Endothelial cell of umbilical vein (primary cell): ENCODE measurements at regions of chr3 and their contacts with region 1.

Region 1: DNA sequence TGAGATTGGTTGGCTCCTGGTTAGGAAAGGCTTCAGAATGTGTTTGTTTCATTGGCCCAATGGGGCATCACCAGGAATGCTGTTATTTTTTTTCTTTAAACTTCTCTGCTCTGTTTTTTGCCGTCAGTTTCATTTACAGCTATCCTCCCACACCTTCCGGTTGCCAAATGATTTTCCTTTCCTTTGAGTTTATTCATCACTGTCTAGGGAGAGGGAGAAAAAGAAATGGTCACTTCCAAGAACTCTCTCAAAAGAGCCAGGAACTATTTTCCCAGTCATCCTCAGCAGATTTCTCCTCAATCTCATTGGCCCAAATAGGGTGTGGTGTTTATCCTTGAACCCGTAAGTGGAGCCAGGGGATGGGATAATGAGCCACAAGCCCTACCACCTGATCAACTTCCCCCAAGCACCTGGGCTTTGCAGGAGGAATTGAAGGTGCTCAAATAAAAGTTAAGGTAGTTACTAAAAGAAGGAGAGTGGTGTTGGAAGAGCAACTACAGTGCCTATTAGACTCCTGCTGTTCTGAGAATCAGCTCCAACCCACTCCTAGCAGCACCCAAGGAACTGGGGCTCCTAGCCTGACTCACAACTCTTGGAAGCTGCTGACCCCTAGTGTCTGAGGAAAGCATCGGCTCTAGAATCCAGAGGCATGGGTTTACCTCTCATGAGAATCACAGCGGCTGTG is 183.8 kb upstream of the IL12A start:
- DNase-seq: peak; percentile 85
- H3K4me3 ChIP-seq: no peak overlapping the region
- H3K27ac ChIP-seq: peak overlapping the region; percentile 19
- H3K4me1 ChIP-seq: peaks cover 18% of the 10 kb centered on the region
- H3K27me3 ChIP-seq: no peaks in the 10 kb centered on the region
- CTCF ChIP-seq: peak; percentile 92 to 96
- POLR2A ChIP-seq: no peak

Region 2: DNA sequence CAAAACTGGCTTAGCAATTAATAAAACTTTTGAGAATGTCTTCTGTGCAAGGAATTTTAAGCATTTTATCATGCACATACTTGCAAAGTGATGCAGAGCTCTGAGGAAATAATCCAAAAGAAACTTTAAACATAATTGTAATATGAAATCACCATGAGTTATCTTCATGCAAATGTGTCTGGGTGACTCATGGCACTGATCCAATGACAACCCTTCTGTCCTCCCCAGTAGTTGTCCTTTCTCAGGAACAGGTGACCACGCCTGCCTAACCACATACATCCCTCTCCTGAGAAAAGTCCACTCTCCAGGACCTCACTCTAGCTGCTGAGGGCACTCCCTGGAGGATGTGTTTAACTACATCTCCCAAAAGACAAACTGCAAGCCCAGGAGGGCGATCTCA is 346.9 kb before region 1 on chr3:
- CTCF ChIA-PET with region 1: no interaction called
- POLR2A ChIA-PET with region 1: no interaction called
- dilution Hi-C with region 1: no loop called
- intact Hi-C with region 1: loop called (anchors 10 kb)
- DNase-seq: peak; percentile 58
- H3K4me3 ChIP-seq: no peak overlapping the region
- H3K27ac ChIP-seq: no peak overlapping the region
- H3K4me1 ChIP-seq: no peaks in the 10 kb centered on the region
- H3K27me3 ChIP-seq: no peaks in the 10 kb centered on the region
- CTCF ChIP-seq: no peak
- POLR2A ChIP-seq: no peak

Region 3: GRCh38 chr3:159711560-159712333 is 93.1 kb before region 1 on chr3:
- CTCF ChIA-PET with region 1: interaction called, 13 read pairs
- POLR2A ChIA-PET with region 1: no interaction called
- dilution Hi-C with region 1: no loop called
- intact Hi-C with region 1: loop called (anchors 2 kb)
- DNase-seq: peak; percentile 99
- H3K4me3 ChIP-seq: no peak overlapping the region
- H3K27ac ChIP-seq: peak overlapping the region; percentile 84
- H3K4me1 ChIP-seq: peaks cover 7% of the 10 kb centered on the region
- H3K27me3 ChIP-seq: peaks cover 0 to 3% of the 10 kb centered on the region in 2 experiments
- CTCF ChIP-seq: no peak
- POLR2A ChIP-seq: peak; percentile 65

Region 4: GRCh38 chr3:159739886-159740453 is 64.9 kb before region 1 on chr3:
- CTCF ChIA-PET with region 1: interaction called, 13 read pairs
- POLR2A ChIA-PET with region 1: no interaction called
- dilution Hi-C with region 1: no loop called
- intact Hi-C with region 1: no loop called
- DNase-seq: no peak
- H3K4me3 ChIP-seq: no peak overlapping the region
- H3K27ac ChIP-seq: no peak overlapping the region
- H3K4me1 ChIP-seq: no peaks in the 10 kb centered on the region
- H3K27me3 ChIP-seq: no peaks in the 10 kb centered on the region
- CTCF ChIP-seq: no peak
- POLR2A ChIP-seq: no peak

Region 5: DNA sequence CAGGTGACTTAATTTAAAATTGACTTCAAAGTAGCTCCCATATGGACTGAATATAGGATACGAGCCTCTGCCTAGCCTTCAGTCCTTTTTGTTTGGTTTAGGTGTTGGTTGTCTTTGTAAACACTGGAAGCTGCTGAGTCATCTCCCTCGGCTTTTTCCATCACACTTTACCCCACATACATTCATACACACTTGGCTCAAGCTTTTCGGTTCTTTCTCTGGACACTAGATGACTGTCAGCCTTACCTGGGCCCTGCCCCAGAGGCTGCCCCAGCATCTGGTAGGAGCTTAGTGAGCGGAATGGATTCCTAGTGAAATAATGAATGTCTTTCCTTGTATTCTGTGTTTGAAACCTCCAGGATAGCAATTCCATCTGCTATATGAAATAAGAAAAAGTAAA is 17.7 kb before region 1 on chr3:
- CTCF ChIA-PET with region 1: interaction called, 27 read pairs
- POLR2A ChIA-PET with region 1: no interaction called
- dilution Hi-C with region 1: no loop called
- intact Hi-C with region 1: no loop called
- DNase-seq: peak; percentile 88
- H3K4me3 ChIP-seq: no peak overlapping the region
- H3K27ac ChIP-seq: peak overlapping the region; percentile 87
- H3K4me1 ChIP-seq: peaks cover 45% of the 10 kb centered on the region
- H3K27me3 ChIP-seq: no peaks in the 10 kb centered on the region
- CTCF ChIP-seq: no peak
- POLR2A ChIP-seq: no peak